ENCODE measurements at regions of chr11 and their contacts with region 1.

Region 1: GRCh38 chr11:130611791-130612251 is 163.4 kb downstream of the ADAMTS15 start:
- DNase-seq: peak; percentile 88
- ATAC-seq: peak; percentile 92
- H3K4me3 ChIP-seq: no peak overlapping the region
- H3K27ac ChIP-seq: peak overlapping the region; percentile 68
- H3K4me1 ChIP-seq: peaks cover 20% of the 10 kb centered on the region
- H3K27me3 ChIP-seq: no peaks in the 10 kb centered on the region
- CTCF ChIP-seq: no peak
- POLR2A ChIP-seq: no peak
- RAD21 ChIP-seq: peak; percentile 20

Region 2: GRCh38 chr11:130146796-130147195 is 465.0 kb before region 1 on chr11:
- CTCF ChIA-PET with region 1: no interaction called
- POLR2A ChIA-PET with region 1: no interaction called
- dilution Hi-C with region 1: no loop called
- in situ Hi-C with region 1: no loop called
- intact Hi-C with region 1: no loop called
- DNase-seq: no peak
- ATAC-seq: no peak
- H3K4me3 ChIP-seq: no peak overlapping the region
- H3K27ac ChIP-seq: no peak overlapping the region
- H3K4me1 ChIP-seq: peaks cover 3% of the 10 kb centered on the region; the same call in 1 of the 2 replicates
- H3K27me3 ChIP-seq: no peaks in the 10 kb centered on the region
- CTCF ChIP-seq: no peak
- POLR2A ChIP-seq: no peak
- RAD21 ChIP-seq: no peak

Region 3: GRCh38 chr11:130601141-130601540 is 10.7 kb before region 1 on chr11:
- CTCF ChIA-PET with region 1: no interaction called
- POLR2A ChIA-PET with region 1: no interaction called
- dilution Hi-C with region 1: no loop called
- in situ Hi-C with region 1: no loop called
- intact Hi-C with region 1: loop called (anchors 1 kb)
- DNase-seq: peak; percentile 90
- ATAC-seq: peak; percentile 98
- H3K4me3 ChIP-seq: no peak overlapping the region
- H3K27ac ChIP-seq: peak overlapping the region; percentile 83
- H3K4me1 ChIP-seq: peaks cover 13% of the 10 kb centered on the region
- H3K27me3 ChIP-seq: no peaks in the 10 kb centered on the region
- CTCF ChIP-seq: no peak
- POLR2A ChIP-seq: no peak
- RAD21 ChIP-seq: peak; percentile 6; the same call in 1 of the 2 replicates